Transverse colon (tissue), 4 donors: ENCODE measurements at regions of chr12 and their contacts with region 1.

Region 1: DNA sequence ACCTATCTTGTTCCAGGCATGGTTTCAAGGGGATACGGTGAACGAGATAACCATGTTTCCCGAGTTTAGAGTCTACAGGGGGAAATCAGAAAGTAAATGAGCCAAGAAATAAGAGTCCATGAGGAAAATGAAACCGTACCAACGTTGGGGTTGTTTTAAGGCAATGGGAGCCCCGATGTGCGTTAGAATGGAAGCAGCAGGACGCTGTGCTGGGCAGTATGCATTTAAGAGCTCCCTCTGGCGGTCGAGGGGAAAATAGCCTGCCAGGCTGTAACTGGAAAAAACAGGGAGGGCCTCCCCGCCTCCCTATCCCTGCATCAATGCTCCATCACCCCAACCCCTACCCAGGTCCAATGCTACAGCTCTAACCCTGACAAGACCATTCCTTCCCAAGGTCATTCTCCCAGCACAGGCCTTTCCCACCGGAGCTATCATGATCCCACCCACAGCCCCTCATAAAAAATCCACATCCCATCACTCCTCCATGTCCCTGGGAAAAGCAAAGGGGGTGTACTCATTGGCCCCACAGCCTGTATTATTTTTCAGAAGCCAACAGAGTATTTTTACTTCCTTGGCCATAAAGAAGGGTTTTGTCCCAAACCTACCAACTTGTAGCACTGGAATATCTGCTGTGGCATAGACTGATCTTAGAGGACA is 226.3 kb upstream of the NOS1 start:
- DNase-seq: peak; percentile 48
- H3K4me3 ChIP-seq: no peak overlapping the region
- H3K27ac ChIP-seq: no peak overlapping the region
- H3K4me1 ChIP-seq: no peaks in the 10 kb centered on the region
- H3K27me3 ChIP-seq: peaks cover 3% of the 10 kb centered on the region
- CTCF ChIP-seq: peak; percentile 64 to 88 (median 81)
- EP300 ChIP-seq: no peak
- POLR2A ChIP-seq: no peak

Region 2: GRCh38 chr12:117236456-117237001 is 351.2 kb before region 1 on chr12:
- in situ Hi-C with region 1: loop called in 1 of 4 experiments (anchors 25 kb)
- intact Hi-C with region 1: no loop called
- DNase-seq: peak; percentile 78
- H3K4me3 ChIP-seq: no peak overlapping the region
- H3K27ac ChIP-seq: no peak overlapping the region
- H3K4me1 ChIP-seq: no peaks in the 10 kb centered on the region
- H3K27me3 ChIP-seq: peaks cover 15% of the 10 kb centered on the region
- CTCF ChIP-seq: peak; percentile 51 to 76 (median 70)
- EP300 ChIP-seq: no peak
- POLR2A ChIP-seq: no peak

Region 3: DNA sequence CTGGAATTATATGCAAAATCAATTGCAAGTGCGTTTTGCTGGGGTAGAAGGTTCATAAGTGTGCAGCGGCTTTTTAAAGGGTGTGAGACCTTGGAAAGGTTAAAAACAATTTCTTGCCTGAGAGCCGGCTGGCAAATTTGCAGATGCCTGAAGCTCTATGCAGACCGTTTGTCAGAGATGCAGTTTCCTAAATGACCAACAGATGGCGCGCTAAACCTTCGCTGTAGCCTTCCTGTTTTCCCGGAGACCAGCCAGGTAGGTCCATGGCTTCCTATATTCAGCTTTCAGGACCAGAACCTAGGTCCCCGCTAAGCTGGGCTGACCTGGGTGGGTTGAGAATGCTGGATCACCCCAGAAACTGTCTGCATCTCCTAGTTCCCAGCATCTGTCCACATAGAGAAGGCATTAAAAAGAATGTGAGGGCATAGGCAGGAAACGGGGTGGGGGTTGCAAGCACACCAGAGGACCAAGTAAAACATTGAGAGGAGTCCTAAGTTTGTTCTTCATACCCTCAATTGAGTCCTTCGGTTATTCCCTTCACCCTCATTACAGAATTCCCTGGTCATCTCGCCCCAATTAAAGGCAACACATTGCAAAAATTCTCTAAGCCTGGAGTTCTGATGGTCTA is 220.6 kb before region 1 on chr12:
- in situ Hi-C with region 1: loop called (anchors 5 to 10 kb)
- intact Hi-C with region 1: loop called (anchors 5 kb)
- DNase-seq: peak; percentile 78
- H3K4me3 ChIP-seq: no peak overlapping the region
- H3K27ac ChIP-seq: no peak overlapping the region
- H3K4me1 ChIP-seq: no peaks in the 10 kb centered on the region
- H3K27me3 ChIP-seq: peaks cover 39% of the 10 kb centered on the region
- CTCF ChIP-seq: peak; percentile 81 to 91 (median 87)
- EP300 ChIP-seq: no peak
- POLR2A ChIP-seq: no peak